ENCODE measurements at regions of chr12 and their contacts with region 1.

Region 1: DNA sequence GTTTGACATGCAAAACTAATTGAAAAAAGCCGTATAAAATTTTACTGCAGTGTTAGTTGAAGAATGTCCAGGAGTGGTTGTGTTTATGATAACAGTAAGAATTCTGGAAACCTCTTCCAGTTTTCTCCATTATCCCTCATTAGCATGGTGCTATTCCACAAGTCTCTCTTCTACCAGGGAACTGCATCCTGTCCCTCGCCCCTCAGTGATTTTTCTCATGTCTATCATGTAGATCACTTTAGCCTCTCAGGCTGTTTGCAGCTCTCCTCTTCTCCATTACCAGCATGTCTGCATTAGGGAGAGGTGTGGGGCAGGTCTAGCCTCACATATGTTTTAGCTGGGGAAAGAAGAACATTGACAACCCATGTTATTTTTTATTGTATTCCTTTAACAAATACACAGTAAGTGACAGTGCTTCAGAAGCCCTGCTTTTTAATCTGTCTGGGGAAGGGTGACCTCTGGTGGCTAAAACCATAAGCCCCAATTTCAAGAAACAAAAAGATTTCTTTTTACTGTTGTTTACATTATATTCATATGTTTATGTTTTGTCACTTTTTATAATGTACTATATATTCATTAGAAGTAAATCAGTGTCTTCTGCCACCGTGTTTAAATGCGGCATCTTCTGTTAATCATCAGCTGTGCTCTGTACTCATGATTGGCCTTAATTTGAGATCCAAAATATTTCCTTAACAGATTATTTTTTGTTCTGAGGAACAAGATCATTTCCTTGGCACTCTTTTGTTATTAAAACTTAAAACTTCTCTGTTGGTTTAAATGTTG is 70.7 kb downstream of the RASSF8 start:
- DNase-seq: peak in 1 of 3 donors; percentile 65
- ATAC-seq: peak; percentile 34
- H3K4me3 ChIP-seq: no peak overlapping the region
- H3K4me1 ChIP-seq: no peaks in the 10 kb centered on the region
- CTCF ChIP-seq: peak; percentile 50

Region 2: GRCh38 chr12:25436203-25437030 is 592.7 kb before region 1 on chr12:
- intact Hi-C with region 1: loop called (anchors 5 to 10 kb)
- DNase-seq: peak in 1 of 3 donors; percentile 52
- ATAC-seq: peak; percentile 56
- H3K4me3 ChIP-seq: no peak overlapping the region
- H3K4me1 ChIP-seq: peaks cover 16% of the 10 kb centered on the region
- CTCF ChIP-seq: peak; percentile 62

Region 3: DNA sequence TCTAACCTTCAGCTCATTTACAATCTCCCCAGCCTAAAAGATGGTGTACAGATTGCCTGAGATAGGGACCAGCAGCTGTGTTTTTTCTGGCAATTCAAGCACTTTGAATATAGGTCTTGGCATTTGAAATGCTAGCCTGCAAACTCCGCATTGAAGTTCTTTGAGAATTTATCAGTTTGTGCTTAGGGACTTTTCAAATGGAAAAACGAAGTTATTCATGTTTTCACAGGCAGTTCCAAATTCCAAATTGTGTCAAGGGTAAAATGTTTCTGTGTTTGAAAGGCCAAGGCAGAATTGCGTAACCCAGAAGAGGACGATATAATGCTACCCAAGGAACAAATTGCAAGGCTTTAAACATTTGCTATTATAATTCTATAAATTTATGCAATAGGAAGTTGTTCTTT is 239.6 kb before region 1 on chr12:
- intact Hi-C with region 1: no loop called
- DNase-seq: no peak
- ATAC-seq: no peak
- H3K4me3 ChIP-seq: no peak overlapping the region
- H3K4me1 ChIP-seq: no peaks in the 10 kb centered on the region
- CTCF ChIP-seq: no peak

Region 4: DNA sequence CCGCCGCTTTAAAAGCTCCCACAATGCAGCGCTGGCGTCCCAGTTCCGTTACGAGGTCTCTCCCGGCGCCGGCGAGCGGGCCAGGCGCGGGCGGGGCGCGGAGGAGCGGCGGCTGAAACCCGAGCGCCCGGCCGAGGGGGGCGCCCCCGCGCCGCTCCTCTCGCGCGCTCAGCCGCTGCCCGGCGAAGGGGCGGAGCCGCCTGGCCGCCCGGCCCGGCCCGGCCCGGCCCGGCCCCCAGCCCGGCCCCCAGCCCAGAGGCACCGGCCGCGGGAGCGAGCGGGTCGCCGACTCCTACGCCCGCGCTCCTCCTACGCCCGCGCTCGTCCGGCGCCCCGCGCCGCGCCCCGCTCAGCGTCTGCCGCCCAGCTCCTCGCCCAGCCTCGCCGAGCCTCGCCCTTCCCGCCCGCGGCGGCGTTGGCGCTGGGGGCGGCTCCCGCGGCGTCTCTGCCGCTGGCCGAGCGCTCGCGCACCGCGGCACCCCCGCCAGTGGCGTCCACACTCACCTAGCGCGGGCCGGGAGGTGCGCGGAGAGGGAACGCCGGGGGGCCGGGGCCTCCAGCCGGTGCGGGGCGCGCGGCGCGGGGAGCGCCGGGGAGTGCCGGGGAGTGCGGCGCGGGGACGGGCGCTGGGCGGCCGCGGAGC is 70.6 kb before region 1 on chr12 and contains the start of gene RASSF8:
- intact Hi-C with region 1: loop called in 1 of 2 experiments (anchors 10 kb)
- DNase-seq: peak; percentile 53 to 76 (median 60)
- ATAC-seq: peak; percentile 88
- H3K4me3 ChIP-seq: peak within 1 kb of the TSS; percentile 34
- H3K4me1 ChIP-seq: peaks cover 9% of the 10 kb centered on the region
- CTCF ChIP-seq: no peak
- total RNA-seq, gene RASSF8: 3.2 to 109 (median 8.0) TPM

Region 5: DNA sequence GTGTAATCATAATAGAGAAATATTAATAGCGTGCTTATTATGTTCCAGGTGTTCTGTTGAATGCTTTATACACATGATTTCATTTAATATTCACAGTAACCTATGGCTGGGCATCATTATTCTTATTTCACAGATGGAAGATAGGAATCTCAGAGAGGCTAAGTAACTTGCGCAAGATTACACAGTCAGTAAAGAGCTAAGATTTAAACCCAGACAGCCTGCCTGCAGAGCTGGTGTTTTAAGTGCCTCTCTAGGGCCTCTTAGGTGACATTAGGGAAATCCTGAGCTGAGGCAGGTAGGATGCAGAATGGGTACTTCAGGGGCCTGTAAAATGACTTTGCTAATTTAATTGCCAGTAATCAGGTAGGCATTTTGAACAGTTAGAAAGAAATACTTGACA is 114.1 kb after region 1 on chr12:
- intact Hi-C with region 1: no loop called
- DNase-seq: no peak
- ATAC-seq: no peak
- H3K4me3 ChIP-seq: no peak overlapping the region
- H3K4me1 ChIP-seq: peaks cover 8% of the 10 kb centered on the region
- CTCF ChIP-seq: no peak

Measured in mucosa of descending colon (tissue), 3 donors.